ENCODE measurements at regions of chr15 and their contacts with region 1.

Region 1: GRCh38 chr15:90233376-90234095 is at the start of gene CIB1:
- DNase-seq: peak; percentile 99
- ATAC-seq: peak; percentile 97
- H3K4me3 ChIP-seq: peak within 1 kb of the TSS; percentile 58 to 76
- H3K27ac ChIP-seq: peak within 1 kb of the TSS; percentile 10 to 83
- H3K4me1 ChIP-seq: no peaks in the 10 kb centered on the region
- H3K27me3 ChIP-seq: no peaks in the 10 kb centered on the region
- total RNA-seq, gene CIB1: 35.5 to 54.7 TPM

Region 2: GRCh38 chr15:88574655-88575054 is 1658.9 kb before region 1 on chr15:
- intact Hi-C with region 1: no loop called
- DNase-seq: no peak
- ATAC-seq: no peak
- H3K4me3 ChIP-seq: no peak overlapping the region
- H3K27ac ChIP-seq: no peak overlapping the region
- H3K4me1 ChIP-seq: no peaks in the 10 kb centered on the region
- H3K27me3 ChIP-seq: no peaks in the 10 kb centered on the region

Region 3: DNA sequence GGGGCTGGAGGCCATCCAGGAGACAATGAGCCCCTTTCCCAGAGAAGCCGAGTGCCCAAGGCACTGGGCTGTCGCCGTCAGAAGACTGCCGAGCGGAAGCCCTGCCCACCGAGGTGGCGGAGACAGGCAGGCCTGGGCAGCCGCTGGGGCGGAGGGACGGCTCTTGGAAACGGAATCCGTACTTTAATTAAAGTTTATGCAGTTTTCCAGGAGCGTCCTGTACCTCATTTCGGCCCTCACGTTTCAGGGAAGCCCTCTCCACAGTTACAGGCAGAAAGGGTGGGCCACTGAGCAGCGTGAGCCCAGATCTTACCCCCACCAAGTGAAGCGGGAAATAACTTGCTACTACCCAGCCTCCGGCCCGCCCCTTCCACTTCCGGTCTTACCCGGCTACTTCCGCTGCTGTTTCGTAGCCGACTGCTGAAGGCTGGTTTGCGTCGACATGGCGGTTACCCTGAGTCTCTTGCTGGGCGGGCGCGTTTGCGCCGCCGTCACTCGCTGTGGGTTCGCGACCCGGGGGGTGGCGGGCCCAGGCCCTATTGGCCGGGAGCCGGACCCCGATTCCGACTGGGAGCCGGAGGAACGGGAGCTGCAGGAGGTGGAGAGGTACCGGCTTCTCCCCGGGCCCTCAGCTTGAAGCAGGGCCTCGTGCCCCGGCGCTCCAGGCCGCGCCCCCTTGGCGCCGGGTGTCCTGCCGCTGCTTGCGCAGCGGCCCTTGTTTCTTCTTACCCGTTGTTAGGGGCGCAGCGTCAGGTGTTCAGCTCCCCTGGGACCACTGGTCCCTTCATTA is 31.9 kb after region 1 on chr15 and contains the start of gene NGRN:
- intact Hi-C with region 1: loop called in 1 of 2 experiments (anchors 5 kb)
- DNase-seq: peak; percentile 95 to 97
- ATAC-seq: peak; percentile 97
- H3K4me3 ChIP-seq: peak within 1 kb of the TSS; percentile 80 to 81
- H3K27ac ChIP-seq: peak within 1 kb of the TSS; percentile 84 to 91
- H3K4me1 ChIP-seq: no peaks in the 10 kb centered on the region
- H3K27me3 ChIP-seq: no peaks in the 10 kb centered on the region
- total RNA-seq, gene NGRN: 75.6 to 81.5 TPM